Tibial artery (tissue), 4 donors: ENCODE measurements at regions of chr1 and their contacts with region 1.

Region 1: GRCh38 chr1:3428899-3429298 is 25.6 kb upstream of the ARHGEF16 start:
- DNase-seq: no peak
- H3K4me3 ChIP-seq: no peak overlapping the region
- H3K27ac ChIP-seq: no peak overlapping the region
- H3K4me1 ChIP-seq: peaks cover 0 to 10% (median 7%) of the 10 kb centered on the region in 4 donors
- H3K27me3 ChIP-seq: no peaks in the 10 kb centered on the region
- CTCF ChIP-seq: no peak

Region 2: DNA sequence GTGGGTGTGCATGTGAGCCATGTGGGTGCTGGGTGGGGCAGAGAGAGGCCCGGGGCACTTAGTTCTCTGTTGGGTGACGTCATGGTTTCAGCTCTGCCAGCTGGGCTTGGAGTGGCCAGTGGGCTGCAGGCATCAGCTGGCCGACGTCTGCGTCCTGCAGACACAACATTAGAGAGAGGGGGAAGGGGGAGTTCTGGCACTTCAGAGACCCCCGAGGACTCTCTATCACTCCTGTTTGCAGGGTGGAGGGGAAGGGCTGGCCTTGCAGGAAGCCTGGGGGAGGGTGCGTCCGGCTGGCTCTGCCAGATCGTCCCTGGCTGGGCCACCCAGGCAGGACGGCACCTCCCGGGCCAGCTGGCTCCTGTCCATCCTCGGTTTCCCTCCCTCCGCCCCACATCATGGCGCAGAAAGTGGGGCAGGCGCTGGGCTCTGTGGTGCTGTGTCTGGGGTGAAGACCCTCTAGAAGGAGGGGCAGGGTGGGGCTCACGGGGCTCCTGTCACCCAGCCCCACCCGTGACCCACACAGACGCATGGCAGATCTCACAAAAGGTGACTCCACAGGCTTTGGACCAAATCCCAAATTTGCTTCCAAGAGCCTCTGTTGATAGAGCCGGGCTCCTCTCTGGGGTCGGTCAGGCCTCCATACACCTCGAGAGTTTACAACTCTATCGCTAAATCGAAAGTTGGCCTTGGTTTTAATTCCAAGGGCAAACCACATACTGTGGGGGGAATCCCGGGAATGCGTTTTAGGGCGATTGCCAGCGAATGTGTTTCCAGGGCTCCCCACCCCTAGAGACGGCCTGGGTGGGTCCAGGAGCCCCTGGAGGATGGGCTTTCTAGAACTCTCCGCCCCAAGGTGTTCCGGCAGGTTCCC is 554.1 kb before region 1 on chr1:
- intact Hi-C with region 1: loop called (anchors 5 kb)
- DNase-seq: peak in 1 of 2 donors; percentile 77
- H3K4me3 ChIP-seq: peak overlapping the region; percentile 38 to 51
- H3K27ac ChIP-seq: peak overlapping the region in 1 of 2 donors; percentile 39
- H3K4me1 ChIP-seq: peaks cover 0 to 22% (median 14%) of the 10 kb centered on the region in 4 donors
- H3K27me3 ChIP-seq: peaks cover 0 to 12% of the 10 kb centered on the region in 2 donors
- CTCF ChIP-seq: no peak

Region 3: GRCh38 chr1:3012456-3013291 is 416.2 kb before region 1 on chr1:
- intact Hi-C with region 1: loop called (anchors 5 kb)
- DNase-seq: peak; percentile 47 to 79
- H3K4me3 ChIP-seq: peak overlapping the region; percentile 3 to 38
- H3K27ac ChIP-seq: peak overlapping the region; percentile 29 to 45
- H3K4me1 ChIP-seq: peaks cover 0 to 15% (median 12%) of the 10 kb centered on the region in 4 donors
- H3K27me3 ChIP-seq: peaks cover 0 to 14% of the 10 kb centered on the region in 2 donors
- CTCF ChIP-seq: peak in 1 of 2 experiments; percentile 97

Region 4: DNA sequence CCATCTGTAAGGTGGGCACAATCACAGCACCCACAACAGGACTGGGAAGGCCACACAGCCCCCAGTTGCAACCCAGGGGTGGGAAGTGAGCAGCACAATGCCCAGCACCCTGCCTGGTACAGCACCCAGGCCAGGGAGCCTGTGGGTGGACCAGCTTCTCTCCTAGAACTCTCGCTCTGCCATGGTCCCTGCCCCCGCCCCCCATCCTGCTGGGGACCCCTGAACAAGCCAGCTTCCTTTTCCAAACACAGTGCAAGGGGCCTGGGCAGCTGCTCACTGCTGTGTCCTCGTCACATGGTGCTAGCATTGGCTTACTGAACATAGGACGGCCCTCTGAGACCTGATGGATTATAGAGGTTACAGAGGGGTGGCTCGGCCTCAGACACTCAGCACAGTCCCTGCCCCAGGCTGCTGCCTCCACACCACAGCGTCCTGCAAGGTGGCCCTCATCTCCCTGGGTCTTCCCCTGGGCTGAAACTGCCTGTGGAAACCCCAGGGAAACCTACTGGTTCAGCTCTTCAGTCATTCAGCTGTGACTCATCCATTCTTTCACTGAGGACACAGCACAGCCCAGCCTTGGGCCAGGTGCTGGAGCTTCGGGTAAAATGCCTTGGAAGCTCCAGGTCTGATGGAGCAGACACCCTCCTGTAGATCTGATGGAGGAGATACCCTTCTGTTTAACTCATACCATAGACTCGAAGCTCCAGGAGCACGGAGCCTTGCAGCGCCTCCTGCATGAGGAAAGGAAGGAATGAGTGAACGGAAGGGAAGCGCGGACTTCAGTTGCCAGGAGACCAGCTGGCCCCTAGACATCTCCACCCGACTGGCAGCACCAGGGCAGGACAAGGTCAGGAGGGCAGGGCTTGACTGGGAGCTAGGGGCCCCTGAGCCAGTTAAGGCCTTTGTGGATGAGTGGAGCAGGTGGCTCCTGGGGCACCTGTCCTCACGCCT is 368.0 kb before region 1 on chr1:
- intact Hi-C with region 1: loop called (anchors 5 kb)
- DNase-seq: no peak
- H3K4me3 ChIP-seq: no peak overlapping the region
- H3K27ac ChIP-seq: no peak overlapping the region
- H3K4me1 ChIP-seq: peaks cover 0 to 35% (median 23%) of the 10 kb centered on the region in 4 donors
- H3K27me3 ChIP-seq: no peaks in the 10 kb centered on the region
- CTCF ChIP-seq: no peak